ENCODE measurements at regions of chr5 and their contacts with region 1.

Region 1: GRCh38 chr5:145774442-145774841 is 60.7 kb downstream of the PRELID2 start:
- DNase-seq: no peak
- ATAC-seq: no peak
- H3K4me3 ChIP-seq: no peak overlapping the region
- H3K4me3 Mint-ChIP-seq: no peak overlapping the region
- H3K27ac ChIP-seq: no peak overlapping the region
- H3K27ac Mint-ChIP-seq: no peak overlapping the region
- H3K4me1 ChIP-seq: no peaks in the 10 kb centered on the region
- H3K4me1 Mint-ChIP-seq: no peaks in the 10 kb centered on the region
- H3K27me3 ChIP-seq: no peaks in the 10 kb centered on the region
- H3K27me3 Mint-ChIP-seq: no peaks in the 10 kb centered on the region
- CTCF ChIP-seq: no peak

Region 2: GRCh38 chr5:144237851-144238250 is 1536.6 kb before region 1 on chr5:
- intact Hi-C with region 1: loop called (anchors 5 kb)
- DNase-seq: no peak
- ATAC-seq: no peak
- H3K4me3 ChIP-seq: no peak overlapping the region
- H3K4me3 Mint-ChIP-seq: no peak overlapping the region
- H3K27ac ChIP-seq: no peak overlapping the region
- H3K27ac Mint-ChIP-seq: no peak overlapping the region
- H3K4me1 ChIP-seq: no peaks in the 10 kb centered on the region
- H3K4me1 Mint-ChIP-seq: no peaks in the 10 kb centered on the region
- H3K27me3 ChIP-seq: peaks cover 3% of the 10 kb centered on the region
- H3K27me3 Mint-ChIP-seq: peaks cover 11 to 26% of the 10 kb centered on the region in 2 donors
- CTCF ChIP-seq: no peak

Region 3: DNA sequence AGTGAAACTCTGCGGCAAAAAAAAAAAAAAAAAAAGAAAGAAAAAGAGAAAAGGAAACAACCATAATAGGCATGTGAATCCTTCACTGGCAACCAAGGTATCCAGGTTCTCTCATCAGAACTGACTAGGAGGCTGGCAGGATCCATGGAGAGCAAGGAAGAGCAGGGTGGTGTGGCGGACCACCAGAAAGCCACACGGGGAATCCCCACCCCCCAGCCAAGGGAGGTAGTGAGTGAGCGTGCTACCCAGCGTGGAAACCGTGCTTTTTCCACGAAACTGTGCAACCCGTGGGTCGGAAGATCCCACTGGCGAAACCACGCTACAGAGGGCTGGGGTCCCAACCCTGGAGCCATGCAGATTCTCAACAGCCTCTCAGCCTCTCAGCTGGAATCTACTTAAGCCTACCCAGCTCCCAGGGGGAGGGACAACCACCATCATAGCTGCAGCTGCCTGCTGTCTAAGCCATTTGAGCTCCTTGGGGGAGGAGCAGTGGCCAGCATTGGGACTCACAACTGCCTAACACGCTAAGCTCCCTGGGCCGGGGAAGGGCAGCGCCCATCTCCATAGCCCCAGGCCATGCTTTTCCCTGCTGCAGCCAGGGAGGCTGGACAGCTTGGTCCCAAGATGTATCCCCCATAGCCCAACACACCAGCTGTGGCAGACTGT is 30.9 kb before region 1 on chr5:
- intact Hi-C with region 1: no loop called
- DNase-seq: peak in 1 of 2 donors; percentile 15
- ATAC-seq: peak; percentile 29 to 54 (median 46)
- H3K4me3 ChIP-seq: no peak overlapping the region
- H3K4me3 Mint-ChIP-seq: no peak overlapping the region
- H3K27ac ChIP-seq: no peak overlapping the region
- H3K27ac Mint-ChIP-seq: no peak overlapping the region
- H3K4me1 ChIP-seq: no peaks in the 10 kb centered on the region
- H3K4me1 Mint-ChIP-seq: no peaks in the 10 kb centered on the region
- H3K27me3 ChIP-seq: no peaks in the 10 kb centered on the region
- H3K27me3 Mint-ChIP-seq: no peaks in the 10 kb centered on the region
- CTCF ChIP-seq: no peak

Region 4: GRCh38 chr5:146249801-146250200 is 475.4 kb after region 1 on chr5:
- intact Hi-C with region 1: no loop called
- DNase-seq: no peak
- ATAC-seq: no peak
- H3K4me3 ChIP-seq: no peak overlapping the region
- H3K4me3 Mint-ChIP-seq: no peak overlapping the region
- H3K27ac ChIP-seq: no peak overlapping the region
- H3K27ac Mint-ChIP-seq: no peak overlapping the region
- H3K4me1 ChIP-seq: no peaks in the 10 kb centered on the region
- H3K4me1 Mint-ChIP-seq: peaks cover 4 to 18% of the 10 kb centered on the region in 2 donors
- H3K27me3 ChIP-seq: no peaks in the 10 kb centered on the region
- H3K27me3 Mint-ChIP-seq: no peaks in the 10 kb centered on the region
- CTCF ChIP-seq: no peak

Measured in natural killer cell (primary cell).